Activated CD4-positive, alpha-beta T cell treated with anti-CD3 and anti-CD28 coated beads for 36 hours (primary cell): ENCODE measurements at regions of chr9 and their contacts with region 1.

Region 1: DNA sequence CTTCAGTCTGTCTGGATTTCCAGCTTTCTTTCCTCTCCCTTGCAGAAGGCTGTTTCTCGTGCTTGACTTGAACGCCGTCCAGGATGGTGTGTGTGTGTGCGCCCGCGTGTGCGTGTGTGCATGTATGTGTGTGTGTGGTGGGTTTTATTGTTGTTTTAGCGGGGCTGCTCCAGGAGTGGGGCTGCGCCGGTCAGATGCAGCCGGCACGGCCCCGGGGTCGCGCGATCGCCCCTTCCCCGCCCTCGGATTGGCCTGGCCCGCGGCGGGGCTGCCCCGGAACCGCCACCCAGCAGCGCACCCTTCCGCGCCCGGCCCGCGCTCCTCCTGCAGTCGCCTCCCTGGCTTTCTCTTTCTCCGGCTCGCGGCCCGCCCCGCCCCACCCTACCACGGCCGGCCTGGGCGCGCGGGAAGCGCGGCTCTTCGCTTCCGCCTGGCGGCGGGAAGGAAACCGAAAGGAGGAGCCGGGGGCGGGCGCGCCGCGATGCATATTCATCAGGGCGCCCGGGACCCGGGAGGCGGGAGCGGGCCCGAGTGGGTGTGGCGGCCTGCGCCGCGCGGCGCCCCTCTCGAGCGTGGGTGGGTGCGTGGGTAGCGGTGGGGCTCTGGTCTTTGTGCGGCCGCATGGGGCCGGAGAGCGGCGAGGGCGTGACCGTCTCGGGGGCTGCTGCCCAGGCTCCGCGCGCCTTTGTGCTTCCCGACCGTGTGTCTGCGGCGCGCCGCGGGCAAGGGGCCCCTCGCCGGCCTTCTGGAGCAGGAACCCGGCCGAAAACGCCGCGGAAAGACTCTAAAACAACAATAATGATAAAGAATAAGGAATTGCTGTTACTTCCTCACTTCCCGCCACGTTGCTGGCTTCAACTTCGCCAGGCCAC is 8.5 kb upstream of the NFIB start:
- DNase-seq: peak; percentile 90
- ATAC-seq: peak; percentile 86
- H3K4me3 Mint-ChIP-seq: peak overlapping the region; percentile 69
- H3K27ac Mint-ChIP-seq: peak overlapping the region; percentile 70
- H3K4me1 Mint-ChIP-seq: peaks cover 23% of the 10 kb centered on the region
- H3K27me3 Mint-ChIP-seq: peaks cover 47% of the 10 kb centered on the region

Region 2: GRCh38 chr9:13942695-13943094 is 379.8 kb before region 1 on chr9:
- CTCF ChIA-PET with region 1: no interaction called
- POLR2A ChIA-PET with region 1: no interaction called
- intact Hi-C with region 1: loop called in 1 of 2 experiments (anchors 10 kb)
- DNase-seq: peak; percentile 61
- ATAC-seq: peak; percentile 100
- H3K4me3 Mint-ChIP-seq: no peak overlapping the region
- H3K27ac Mint-ChIP-seq: no peak overlapping the region
- H3K4me1 Mint-ChIP-seq: peaks cover 3% of the 10 kb centered on the region
- H3K27me3 Mint-ChIP-seq: peaks cover 1% of the 10 kb centered on the region

Region 3: DNA sequence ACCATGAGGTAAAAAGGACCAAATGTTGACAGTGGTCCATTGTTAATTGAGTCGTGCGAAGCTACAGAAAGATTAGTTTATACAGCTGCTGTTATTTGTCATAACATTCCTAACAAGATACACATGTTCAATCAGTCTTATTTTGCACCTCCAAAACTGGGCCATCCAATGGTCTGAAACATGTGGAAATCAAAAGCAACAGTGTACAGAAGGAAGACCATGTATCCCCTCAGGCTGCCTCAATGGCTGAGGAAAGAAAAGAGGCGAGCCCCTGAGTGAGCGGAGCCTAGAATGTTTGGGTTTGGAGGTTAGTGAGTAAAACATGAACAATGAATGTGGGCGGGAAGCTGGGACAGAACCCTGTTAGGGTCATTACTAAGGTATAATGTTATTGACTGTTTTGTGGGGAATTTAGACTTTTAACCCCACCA is 44.1 kb before region 1 on chr9:
- CTCF ChIA-PET with region 1: no interaction called
- POLR2A ChIA-PET with region 1: no interaction called
- intact Hi-C with region 1: no loop called
- DNase-seq: no peak
- ATAC-seq: no peak
- H3K4me3 Mint-ChIP-seq: no peak overlapping the region
- H3K27ac Mint-ChIP-seq: no peak overlapping the region
- H3K4me1 Mint-ChIP-seq: peaks cover 5% of the 10 kb centered on the region
- H3K27me3 Mint-ChIP-seq: peaks cover 20% of the 10 kb centered on the region

Region 4: GRCh38 chr9:14693206-14693861 is 370.9 kb after region 1 on chr9 and contains the start of gene ZDHHC21:
- CTCF ChIA-PET with region 1: no interaction called
- POLR2A ChIA-PET with region 1: no interaction called
- intact Hi-C with region 1: loop called in 1 of 2 experiments (anchors 10 kb)
- DNase-seq: peak; percentile 79
- ATAC-seq: peak; percentile 88
- H3K4me3 Mint-ChIP-seq: peak within 1 kb of the TSS; percentile 91
- H3K27ac Mint-ChIP-seq: peak within 1 kb of the TSS; percentile 94
- H3K4me1 Mint-ChIP-seq: peaks cover 27% of the 10 kb centered on the region
- H3K27me3 Mint-ChIP-seq: peaks cover 4% of the 10 kb centered on the region
- total RNA-seq, gene ZDHHC21: 5.1 TPM

Region 5: GRCh38 chr9:15306757-15307534 is 984.5 kb after region 1 on chr9 and contains the start of gene TTC39B:
- CTCF ChIA-PET with region 1: no interaction called
- POLR2A ChIA-PET with region 1: no interaction called
- intact Hi-C with region 1: loop called in 1 of 2 experiments (anchors 10 kb)
- DNase-seq: peak; percentile 90
- ATAC-seq: peak; percentile 83
- H3K4me3 Mint-ChIP-seq: peak within 1 kb of the TSS; percentile 98
- H3K27ac Mint-ChIP-seq: peak within 1 kb of the TSS; percentile 98
- H3K4me1 Mint-ChIP-seq: peaks cover 59% of the 10 kb centered on the region
- H3K27me3 Mint-ChIP-seq: no peaks in the 10 kb centered on the region
- total RNA-seq, gene TTC39B: 26.4 to 34.4 TPM

Region 6: GRCh38 chr9:15552636-15553527 is 1230.4 kb after region 1 on chr9 and contains the start of gene CCDC171:
- CTCF ChIA-PET with region 1: no interaction called
- POLR2A ChIA-PET with region 1: no interaction called
- intact Hi-C with region 1: loop called in 1 of 2 experiments (anchors 10 kb)
- DNase-seq: peak; percentile 93
- ATAC-seq: peak; percentile 91
- H3K4me3 Mint-ChIP-seq: peak within 1 kb of the TSS; percentile 79
- H3K27ac Mint-ChIP-seq: peak within 1 kb of the TSS; percentile 80
- H3K4me1 Mint-ChIP-seq: peaks cover 9% of the 10 kb centered on the region
- H3K27me3 Mint-ChIP-seq: no peaks in the 10 kb centered on the region
- total RNA-seq, gene CCDC171: 2.8 to 2.9 TPM